Activated CD4-positive, alpha-beta T cell treated with anti-CD3 and anti-CD28 coated beads for 36 hours (primary cell): ENCODE measurements at regions of chr14 and their contacts with region 1.

Region 1: GRCh38 chr14:24051789-24052655 is at the start of gene CARMIL3:
- DNase-seq: peak; percentile 77
- ATAC-seq: peak; percentile 57
- H3K4me3 Mint-ChIP-seq: peak within 1 kb of the TSS; percentile 57
- H3K27ac Mint-ChIP-seq: peak within 1 kb of the TSS; percentile 67
- H3K4me1 Mint-ChIP-seq: peaks cover 19% of the 10 kb centered on the region
- H3K27me3 Mint-ChIP-seq: peaks cover 8% of the 10 kb centered on the region
- total RNA-seq, gene CARMIL3: 0.74 to 0.91 TPM

Region 2: GRCh38 chr14:22955702-22956569 is 1096.1 kb before region 1 on chr14:
- CTCF ChIA-PET with region 1: no interaction called
- POLR2A ChIA-PET with region 1: no interaction called
- intact Hi-C with region 1: no loop called
- DNase-seq: no peak
- ATAC-seq: no peak
- H3K4me3 Mint-ChIP-seq: peak overlapping the region; percentile 88
- H3K27ac Mint-ChIP-seq: peak overlapping the region; percentile 90
- H3K4me1 Mint-ChIP-seq: peaks cover 18% of the 10 kb centered on the region
- H3K27me3 Mint-ChIP-seq: no peaks in the 10 kb centered on the region

Region 3: GRCh38 chr14:23984891-23985602 is 67.0 kb before region 1 on chr14:
- CTCF ChIA-PET with region 1: no interaction called
- POLR2A ChIA-PET with region 1: no interaction called
- intact Hi-C with region 1: loop called in 1 of 2 experiments (anchors 2 kb)
- DNase-seq: no peak
- ATAC-seq: no peak
- H3K4me3 Mint-ChIP-seq: no peak overlapping the region
- H3K27ac Mint-ChIP-seq: no peak overlapping the region
- H3K4me1 Mint-ChIP-seq: peaks cover 18% of the 10 kb centered on the region
- H3K27me3 Mint-ChIP-seq: no peaks in the 10 kb centered on the region

Region 4: DNA sequence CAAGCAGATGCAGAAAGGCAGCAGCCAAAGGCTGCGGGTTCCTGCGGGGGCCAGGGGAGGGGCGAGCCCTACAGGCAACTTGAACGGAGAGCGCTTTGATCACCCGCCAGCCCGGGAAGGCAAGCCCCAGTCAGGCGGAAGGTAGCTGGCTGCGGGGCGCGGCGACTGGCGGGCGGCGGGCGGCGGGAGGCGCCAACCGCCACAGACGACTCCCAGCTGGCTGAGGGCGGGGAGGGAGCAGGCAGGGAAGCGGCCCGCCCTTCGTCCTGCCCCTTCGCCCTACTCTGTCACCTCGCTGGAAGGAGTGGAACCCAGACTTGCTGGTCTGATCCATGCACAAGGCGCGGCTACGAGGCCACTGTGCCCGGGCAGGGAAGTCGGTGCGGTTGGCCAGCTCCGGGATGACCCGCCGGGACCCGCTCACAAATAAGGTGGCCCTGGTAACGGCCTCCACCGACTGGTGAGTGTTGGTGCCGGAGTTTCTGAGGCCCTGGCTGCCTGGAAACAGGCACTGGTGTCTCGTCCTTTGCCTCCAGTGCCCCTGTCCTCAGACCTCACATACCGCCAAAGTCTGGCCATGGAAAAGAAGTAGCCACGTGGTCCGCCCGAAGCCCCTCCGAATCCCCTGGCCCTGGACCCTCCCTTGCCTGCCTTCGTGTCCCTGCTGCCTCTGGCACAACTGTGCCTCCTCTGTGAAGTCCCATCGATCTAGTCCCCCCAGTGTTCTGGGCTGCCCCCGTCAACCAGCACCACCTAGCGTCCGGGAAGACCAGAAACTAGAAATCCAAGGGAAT is 15.7 kb before region 1 on chr14:
- CTCF ChIA-PET with region 1: no interaction called
- POLR2A ChIA-PET with region 1: no interaction called
- intact Hi-C with region 1: loop called in 1 of 2 experiments (anchors 1 kb)
- DNase-seq: peak; percentile 86
- ATAC-seq: peak; percentile 89
- H3K4me3 Mint-ChIP-seq: peak overlapping the region; percentile 92
- H3K27ac Mint-ChIP-seq: peak overlapping the region; percentile 88
- H3K4me1 Mint-ChIP-seq: peaks cover 15% of the 10 kb centered on the region
- H3K27me3 Mint-ChIP-seq: no peaks in the 10 kb centered on the region

Region 5: GRCh38 chr14:24075485-24076301 is 23.7 kb after region 1 on chr14:
- CTCF ChIA-PET with region 1: interaction called, 6 read pairs
- POLR2A ChIA-PET with region 1: no interaction called
- intact Hi-C with region 1: loop called in 1 of 2 experiments (anchors 1 kb)
- DNase-seq: no peak
- ATAC-seq: no peak
- H3K4me3 Mint-ChIP-seq: no peak overlapping the region
- H3K27ac Mint-ChIP-seq: no peak overlapping the region
- H3K4me1 Mint-ChIP-seq: peaks cover 18% of the 10 kb centered on the region
- H3K27me3 Mint-ChIP-seq: peaks cover 2% of the 10 kb centered on the region